ENCODE measurements at regions of chr20 and their contacts with region 1.

Region 1: DNA sequence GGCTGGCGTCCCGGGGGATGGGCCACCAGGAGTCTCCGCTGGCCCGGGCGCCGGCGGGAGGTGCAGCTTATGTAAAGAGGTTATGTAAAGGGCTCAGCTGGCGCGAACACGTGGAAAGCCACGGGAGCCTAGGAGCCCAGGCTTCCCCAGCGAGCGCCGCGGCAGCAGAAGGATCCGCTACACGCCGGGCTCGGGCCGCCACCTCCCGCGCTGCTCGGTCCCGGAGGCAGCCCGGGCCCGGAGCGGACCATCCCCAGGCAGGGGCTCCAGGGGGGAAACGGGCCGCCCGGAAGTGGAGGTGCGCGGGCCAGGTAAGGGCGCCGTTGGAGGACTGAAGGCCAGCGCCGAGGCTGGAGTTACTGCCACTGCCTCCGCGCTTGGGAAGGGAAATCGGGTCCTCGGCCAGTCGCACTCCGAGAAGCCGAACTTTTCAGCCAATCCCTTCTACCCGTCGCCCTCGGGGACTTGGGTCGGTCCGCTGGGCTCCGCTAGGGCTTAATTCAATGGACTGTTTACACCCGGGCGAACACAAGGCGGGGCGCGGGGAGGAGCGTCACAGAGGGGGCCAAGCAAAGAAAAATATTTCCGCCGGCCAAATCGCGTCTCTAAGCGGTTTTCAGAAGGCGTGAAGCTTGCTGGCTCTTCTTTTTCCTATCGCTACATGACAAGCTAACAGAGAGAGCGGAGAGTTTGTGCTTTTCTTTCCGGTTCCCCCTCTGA is 398 bp downstream of the STK35 start:
- DNase-seq: peak; percentile 88 to 91
- ATAC-seq: peak; percentile 88 to 89
- H3K4me3 ChIP-seq: peak overlapping the region; percentile 72 to 92 (median 90)
- H3K27ac ChIP-seq: peak overlapping the region; percentile 94 to 99 (median 96)
- H3K4me1 ChIP-seq: peaks cover 40 to 42% of the 10 kb centered on the region in 2 donors
- H3K27me3 ChIP-seq: no peaks in the 10 kb centered on the region
- CTCF ChIP-seq: no peak
- POLR2A ChIP-seq: peak; percentile 53 to 54

Region 2: GRCh38 chr20:1466211-1467081 is 635.6 kb before region 1 on chr20 and contains the start of gene NSFL1C:
- in situ Hi-C with region 1: no loop called
- intact Hi-C with region 1: loop called (anchors 5 kb)
- DNase-seq: peak; percentile 91 to 92
- ATAC-seq: peak; percentile 92 to 93
- H3K4me3 ChIP-seq: peak within 1 kb of the TSS; percentile 84 to 98 (median 96)
- H3K27ac ChIP-seq: peak within 1 kb of the TSS; percentile 92 to 98 (median 95)
- H3K4me1 ChIP-seq: peaks cover 25 to 39% of the 10 kb centered on the region in 2 donors
- H3K27me3 ChIP-seq: no peaks in the 10 kb centered on the region
- CTCF ChIP-seq: peak; percentile 85 to 100 (median 99)
- POLR2A ChIP-seq: peak; percentile 75 to 93
- total RNA-seq, gene NSFL1C: 68.0 to 91.4 (median 80.6) TPM

Region 3: DNA sequence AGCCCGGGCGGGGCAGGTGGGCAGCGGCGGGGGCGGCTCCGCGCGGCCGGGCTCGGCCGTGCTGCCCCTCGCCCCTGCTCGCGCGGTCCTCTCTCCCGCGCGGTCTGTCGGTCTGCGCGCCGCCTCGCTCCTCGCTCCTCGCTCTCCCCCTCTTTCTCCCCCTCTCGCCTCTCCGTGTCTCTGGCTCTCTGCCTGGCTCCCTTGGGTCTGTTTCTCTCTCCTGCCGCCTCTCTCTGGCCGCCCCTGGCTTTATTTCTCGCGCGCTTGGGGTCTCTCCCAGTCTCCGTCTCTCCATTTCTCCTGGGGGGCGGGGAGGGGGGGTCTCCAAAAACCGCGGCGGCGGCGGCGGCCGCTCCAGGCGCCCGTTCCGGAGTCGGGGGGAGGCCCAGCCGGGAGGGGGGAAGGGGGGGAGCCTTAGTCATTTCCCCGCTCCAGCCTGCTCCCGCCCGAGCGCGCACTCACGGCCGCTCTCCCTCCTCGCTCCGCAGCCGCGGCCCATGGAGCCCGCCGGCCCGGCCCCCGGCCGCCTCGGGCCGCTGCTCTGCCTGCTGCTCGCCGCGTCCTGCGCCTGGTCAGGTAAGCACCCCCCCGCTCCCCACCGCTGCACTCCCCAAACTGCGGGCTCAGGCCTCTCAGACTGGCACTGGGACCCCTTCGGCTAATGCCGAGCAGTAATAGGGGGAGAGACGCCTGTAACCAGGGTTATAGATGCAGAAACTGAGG is 206.9 kb before region 1 on chr20 and contains the start of gene SIRPA:
- in situ Hi-C with region 1: no loop called
- intact Hi-C with region 1: loop called (anchors 2 kb)
- DNase-seq: peak; percentile 37 to 50
- ATAC-seq: peak; percentile 77
- H3K4me3 ChIP-seq: peak within 1 kb of the TSS; percentile 65 to 94 (median 73)
- H3K27ac ChIP-seq: peak within 1 kb of the TSS; percentile 79 to 81 (median 80)
- H3K4me1 ChIP-seq: peaks cover 0 to 21% of the 10 kb centered on the region in 2 donors
- H3K27me3 ChIP-seq: no peaks in the 10 kb centered on the region
- CTCF ChIP-seq: no peak
- POLR2A ChIP-seq: peak; percentile 57 to 67
- total RNA-seq, gene SIRPA: 14.6 to 62.0 (median 20.6) TPM

Region 4: GRCh38 chr20:2172305-2173175 is 70.5 kb after region 1 on chr20:
- in situ Hi-C with region 1: no loop called
- intact Hi-C with region 1: loop called (anchors 5 kb)
- DNase-seq: peak; percentile 37 to 61
- ATAC-seq: peak; percentile 79 to 90
- H3K4me3 ChIP-seq: no peak overlapping the region
- H3K27ac ChIP-seq: no peak overlapping the region
- H3K4me1 ChIP-seq: no peaks in the 10 kb centered on the region
- H3K27me3 ChIP-seq: no peaks in the 10 kb centered on the region
- CTCF ChIP-seq: peak; percentile 84 to 90 (median 89)
- POLR2A ChIP-seq: no peak

Region 5: GRCh38 chr20:2651772-2652723 is 550.0 kb after region 1 on chr20 and contains the start of gene NOP56:
- in situ Hi-C with region 1: no loop called
- intact Hi-C with region 1: loop called (anchors 5 kb)
- DNase-seq: peak; percentile 81 to 85
- ATAC-seq: peak; percentile 90 to 92
- H3K4me3 ChIP-seq: peak within 1 kb of the TSS; percentile 84 to 96 (median 90)
- H3K27ac ChIP-seq: peak within 1 kb of the TSS; percentile 91 to 97 (median 94)
- H3K4me1 ChIP-seq: peaks cover 17 to 21% of the 10 kb centered on the region in 2 donors
- H3K27me3 ChIP-seq: no peaks in the 10 kb centered on the region
- CTCF ChIP-seq: no peak
- POLR2A ChIP-seq: peak; percentile 84 to 95
- total RNA-seq, gene NOP56: 40.7 to 71.0 (median 54.9) TPM